CD4-positive, alpha-beta T cell (primary cell): ENCODE measurements at regions of chr1 and their contacts with region 1.

Region 1: GRCh38 chr1:198265073-198265661 is 108.4 kb downstream of the NEK7 start:
- DNase-seq: no peak
- ATAC-seq: no peak
- H3K4me3 ChIP-seq: no peak overlapping the region
- H3K4me3 Mint-ChIP-seq: no peak overlapping the region
- H3K27ac ChIP-seq: no peak overlapping the region
- H3K27ac Mint-ChIP-seq: no peak overlapping the region
- H3K4me1 ChIP-seq: no peaks in the 10 kb centered on the region
- H3K4me1 Mint-ChIP-seq: peaks cover 31% of the 10 kb centered on the region
- H3K27me3 ChIP-seq: no peaks in the 10 kb centered on the region
- H3K27me3 Mint-ChIP-seq: no peaks in the 10 kb centered on the region
- CTCF ChIP-seq: no peak

Region 2: DNA sequence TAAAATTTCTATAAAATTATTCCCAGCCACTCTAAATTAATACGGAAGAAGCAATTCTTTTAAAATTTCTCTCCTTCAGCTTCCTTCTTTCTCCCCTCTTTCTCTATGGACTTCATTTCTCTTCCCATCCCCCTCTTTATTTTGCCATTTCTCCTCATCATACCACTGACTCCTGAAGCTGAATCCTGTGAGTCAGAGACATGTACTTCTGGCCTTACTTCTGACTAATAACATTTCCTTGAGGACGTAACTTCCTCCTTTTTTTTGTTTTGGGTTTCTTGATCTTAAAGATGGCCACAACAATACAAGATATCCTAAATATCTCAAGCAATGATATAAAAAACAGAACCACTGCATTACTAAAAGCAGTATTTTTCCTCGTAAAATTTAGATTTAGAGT is 426.3 kb before region 1 on chr1:
- CTCF ChIA-PET with region 1: no interaction called
- POLR2A ChIA-PET with region 1: no interaction called
- intact Hi-C with region 1: no loop called
- DNase-seq: peak in 3 of 14 experiments; percentile 8 to 52 (median 46)
- ATAC-seq: no peak
- H3K4me3 ChIP-seq: no peak overlapping the region
- H3K4me3 Mint-ChIP-seq: no peak overlapping the region
- H3K27ac ChIP-seq: no peak overlapping the region
- H3K27ac Mint-ChIP-seq: no peak overlapping the region
- H3K4me1 ChIP-seq: no peaks in the 10 kb centered on the region
- H3K4me1 Mint-ChIP-seq: no peaks in the 10 kb centered on the region
- H3K27me3 ChIP-seq: no peaks in the 10 kb centered on the region
- H3K27me3 Mint-ChIP-seq: no peaks in the 10 kb centered on the region
- CTCF ChIP-seq: no peak

Region 3: DNA sequence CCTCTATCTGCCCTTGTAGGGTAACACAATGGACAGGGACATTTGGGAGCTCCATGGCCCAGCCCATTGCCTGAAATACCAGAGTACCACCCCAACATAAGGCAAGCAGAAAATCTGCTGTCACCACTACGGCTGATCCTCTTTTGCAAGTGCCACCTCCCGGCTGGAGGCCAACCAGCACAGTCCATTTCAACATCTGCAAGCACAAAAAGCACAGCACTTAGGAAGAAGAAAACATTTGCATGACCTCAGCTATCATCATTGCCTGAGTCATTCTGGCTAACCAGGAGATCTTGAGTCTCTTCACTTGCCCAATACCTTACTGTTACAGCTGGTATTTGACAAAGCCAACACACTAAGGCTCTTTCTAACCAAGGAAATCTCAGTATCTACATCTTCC is 52.5 kb before region 1 on chr1:
- CTCF ChIA-PET with region 1: no interaction called
- POLR2A ChIA-PET with region 1: no interaction called
- intact Hi-C with region 1: loop called in 1 of 2 experiments (anchors 10 kb)
- DNase-seq: no peak
- ATAC-seq: no peak
- H3K4me3 ChIP-seq: no peak overlapping the region
- H3K4me3 Mint-ChIP-seq: no peak overlapping the region
- H3K27ac ChIP-seq: no peak overlapping the region
- H3K27ac Mint-ChIP-seq: no peak overlapping the region
- H3K4me1 ChIP-seq: peaks cover 2% of the 10 kb centered on the region
- H3K4me1 Mint-ChIP-seq: peaks cover 32% of the 10 kb centered on the region
- H3K27me3 ChIP-seq: no peaks in the 10 kb centered on the region
- H3K27me3 Mint-ChIP-seq: no peaks in the 10 kb centered on the region
- CTCF ChIP-seq: no peak

Region 4: GRCh38 chr1:198246337-198246736 is 18.8 kb before region 1 on chr1:
- CTCF ChIA-PET with region 1: no interaction called
- POLR2A ChIA-PET with region 1: no interaction called
- intact Hi-C with region 1: no loop called
- DNase-seq: no peak
- ATAC-seq: no peak
- H3K4me3 ChIP-seq: no peak overlapping the region
- H3K4me3 Mint-ChIP-seq: no peak overlapping the region
- H3K27ac ChIP-seq: no peak overlapping the region
- H3K27ac Mint-ChIP-seq: no peak overlapping the region
- H3K4me1 ChIP-seq: no peaks in the 10 kb centered on the region
- H3K4me1 Mint-ChIP-seq: peaks cover 39% of the 10 kb centered on the region
- H3K27me3 ChIP-seq: no peaks in the 10 kb centered on the region
- H3K27me3 Mint-ChIP-seq: no peaks in the 10 kb centered on the region
- CTCF ChIP-seq: no peak

Region 5: DNA sequence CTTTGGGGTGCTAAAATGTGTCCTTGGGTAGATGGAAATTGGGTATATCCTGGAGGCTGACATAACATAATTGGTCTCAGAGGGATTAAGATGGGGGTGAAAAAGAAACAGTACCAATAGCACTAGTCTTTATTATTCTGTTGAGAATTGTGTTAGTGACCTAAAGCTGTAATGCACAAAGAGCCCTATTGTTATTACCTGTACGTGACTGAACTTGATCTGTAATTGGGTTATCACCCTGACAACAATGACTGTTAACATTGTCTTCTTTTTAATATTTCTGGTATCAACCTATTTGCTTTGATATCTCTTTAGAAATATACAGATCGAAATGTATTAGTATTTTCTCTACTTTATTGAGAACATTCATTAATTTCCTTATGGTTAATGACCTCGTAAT is 39.3 kb after region 1 on chr1:
- CTCF ChIA-PET with region 1: no interaction called
- POLR2A ChIA-PET with region 1: no interaction called
- intact Hi-C with region 1: no loop called
- DNase-seq: no peak
- ATAC-seq: no peak
- H3K4me3 ChIP-seq: no peak overlapping the region
- H3K4me3 Mint-ChIP-seq: no peak overlapping the region
- H3K27ac ChIP-seq: no peak overlapping the region
- H3K27ac Mint-ChIP-seq: no peak overlapping the region
- H3K4me1 ChIP-seq: no peaks in the 10 kb centered on the region
- H3K4me1 Mint-ChIP-seq: no peaks in the 10 kb centered on the region
- H3K27me3 ChIP-seq: no peaks in the 10 kb centered on the region
- H3K27me3 Mint-ChIP-seq: no peaks in the 10 kb centered on the region
- CTCF ChIP-seq: no peak